Activated naive CD4-positive, alpha-beta T cell treated with anti-CD3 and anti-CD28 coated beads for 36 hours (primary cell): ENCODE measurements at regions of chr5 and their contacts with region 1.

Region 1: DNA sequence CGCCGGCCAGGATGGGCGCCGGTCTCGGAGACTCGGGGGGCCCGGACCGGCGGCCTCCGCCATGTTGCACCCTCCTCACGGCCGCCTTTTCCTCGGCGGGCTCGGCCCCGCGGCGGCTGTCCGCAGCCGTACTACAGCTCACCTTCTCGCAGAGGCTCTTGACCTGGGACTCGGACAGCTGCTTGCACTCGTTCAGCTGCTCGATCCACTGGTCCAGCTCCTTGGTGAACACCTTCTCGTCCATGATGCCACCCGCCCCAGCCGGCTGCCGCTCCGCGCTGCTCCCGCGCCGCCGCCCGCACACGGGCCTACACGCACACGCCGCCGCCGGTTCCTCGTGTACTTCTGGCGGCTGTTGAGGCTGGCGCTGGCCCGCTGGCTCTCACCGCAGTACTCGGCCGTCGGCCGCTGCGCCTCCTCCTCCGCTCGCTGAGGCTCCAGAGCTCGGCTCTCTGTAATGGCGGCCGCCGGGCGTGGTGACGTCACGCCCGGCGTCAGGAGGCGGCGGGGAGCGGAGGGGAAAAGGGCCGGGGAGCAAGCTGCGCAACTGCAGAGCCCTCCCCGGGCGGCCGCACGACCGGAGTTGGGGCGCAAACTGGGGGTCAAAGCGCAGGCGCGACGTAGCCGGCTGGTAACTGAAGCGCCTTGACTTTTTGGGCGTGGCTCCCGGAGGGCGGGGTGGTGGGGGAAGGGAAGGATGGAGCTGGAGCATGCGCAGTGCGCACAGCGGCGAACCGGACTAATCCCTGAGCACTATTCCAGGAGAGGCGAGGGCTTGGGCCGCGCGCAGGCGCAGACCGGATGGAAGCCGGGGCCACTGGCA is at the start of gene PPP2CA:
- DNase-seq: peak; percentile 99
- H3K4me3 Mint-ChIP-seq: peak within 1 kb of the TSS; percentile 96
- H3K27ac Mint-ChIP-seq: peak within 1 kb of the TSS; percentile 96
- H3K4me1 Mint-ChIP-seq: peaks cover 52% of the 10 kb centered on the region
- H3K27me3 Mint-ChIP-seq: no peaks in the 10 kb centered on the region
- total RNA-seq, gene PPP2CA: 132 to 135 TPM

Region 2: DNA sequence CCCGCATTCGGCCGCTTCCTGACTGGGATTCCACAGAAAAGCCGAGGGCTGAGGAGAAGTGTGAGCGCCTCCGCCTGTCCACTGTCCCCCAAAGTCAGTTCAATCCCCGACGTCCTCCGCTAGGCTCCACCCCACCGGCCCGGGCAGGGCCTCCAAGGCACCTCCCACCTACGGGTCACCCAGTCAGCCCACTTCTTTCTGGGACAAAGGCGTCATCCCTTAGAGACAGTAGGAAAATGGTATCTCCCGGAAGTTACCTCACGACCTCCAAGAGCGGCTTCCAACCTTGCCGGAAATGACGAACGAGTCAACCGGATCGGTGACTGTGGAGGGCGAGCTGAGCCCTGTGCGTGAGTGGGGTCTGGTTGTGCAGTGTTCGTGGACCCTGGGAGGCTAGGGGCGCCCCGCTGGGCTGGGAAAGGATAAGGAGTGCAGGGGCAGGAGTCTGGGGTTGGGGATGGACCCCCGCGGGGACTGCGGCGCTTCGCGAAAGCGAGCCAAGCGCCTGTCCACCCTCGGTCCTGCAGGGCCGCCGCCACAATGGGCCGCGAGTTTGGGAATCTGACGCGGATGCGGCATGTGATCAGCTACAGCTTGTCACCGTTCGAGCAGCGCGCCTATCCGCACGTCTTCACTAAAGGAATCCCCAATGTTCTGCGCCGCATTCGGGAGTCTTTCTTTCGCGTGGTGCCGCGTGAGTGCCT is 1359.3 kb before region 1 on chr5 and contains the starts of genes GDF9 and UQCRQ:
- CTCF ChIA-PET with region 1: no interaction called
- intact Hi-C with region 1: loop called (anchors 10 kb)
- DNase-seq: peak; percentile 96
- H3K4me3 Mint-ChIP-seq: peak within 1 kb of the TSS; percentile 99
- H3K27ac Mint-ChIP-seq: peak within 1 kb of the TSS; percentile 97
- H3K4me1 Mint-ChIP-seq: peaks cover 27% of the 10 kb centered on the region
- H3K27me3 Mint-ChIP-seq: no peaks in the 10 kb centered on the region
- total RNA-seq, gene GDF9: 0.64 to 1.2 TPM
- total RNA-seq, gene UQCRQ: 677 to 784 TPM

Region 3: GRCh38 chr5:134004592-134005375 is 221.0 kb before region 1 on chr5 and contains the start of gene VDAC1:
- CTCF ChIA-PET with region 1: interaction called, 3 read pairs
- intact Hi-C with region 1: loop called (anchors 1 kb)
- DNase-seq: peak; percentile 79
- H3K4me3 Mint-ChIP-seq: peak within 1 kb of the TSS; percentile 89
- H3K27ac Mint-ChIP-seq: peak within 1 kb of the TSS; percentile 95
- H3K4me1 Mint-ChIP-seq: peaks cover 42% of the 10 kb centered on the region
- H3K27me3 Mint-ChIP-seq: no peaks in the 10 kb centered on the region
- total RNA-seq, gene VDAC1: 485 to 513 TPM

Region 4: DNA sequence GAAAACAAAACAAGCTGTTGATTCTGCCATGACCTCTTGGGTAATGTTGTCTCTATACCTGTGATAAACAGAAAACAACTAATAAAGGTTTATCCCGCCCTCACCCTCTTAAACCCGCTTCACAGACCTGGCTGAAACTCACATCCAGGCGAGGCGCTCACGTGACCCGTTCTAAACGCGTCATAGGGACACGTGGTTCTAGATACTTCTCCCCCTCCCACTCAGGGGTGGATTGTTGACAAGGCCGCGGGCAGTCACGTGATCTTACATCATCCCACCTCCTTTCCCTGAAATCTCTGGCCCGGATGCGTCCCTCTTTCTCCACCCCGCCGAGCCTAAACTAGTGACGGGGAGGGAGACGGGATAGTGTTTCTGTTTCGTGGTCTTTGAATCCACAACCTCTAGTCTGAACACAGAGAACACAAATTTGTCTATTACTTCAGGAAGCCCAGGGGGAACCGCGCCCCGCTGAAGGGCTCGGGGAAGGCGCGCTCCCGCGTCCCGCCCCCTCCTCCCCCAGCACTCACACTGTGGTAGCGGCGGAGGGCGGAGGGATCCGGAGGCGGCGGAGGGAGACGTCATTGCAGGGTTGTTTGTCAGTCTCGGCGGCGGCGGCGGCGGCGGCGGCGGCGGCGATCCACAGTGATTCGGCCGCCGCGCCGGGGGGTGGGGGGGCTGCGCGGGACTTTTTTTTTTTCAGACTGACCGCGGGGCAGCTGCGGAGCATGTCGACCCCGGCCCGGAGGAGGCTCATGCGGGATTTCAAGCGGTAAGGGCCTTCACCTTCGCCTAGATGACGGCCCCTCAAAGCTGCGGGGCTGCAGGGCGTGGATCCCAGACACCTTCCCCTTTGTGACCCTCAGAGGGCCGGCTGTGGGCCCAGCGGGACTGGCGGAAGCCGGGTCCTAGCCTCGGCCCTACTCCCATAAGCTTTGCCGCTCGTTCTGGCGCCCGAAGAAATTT is 145.3 kb after region 1 on chr5 and contains the start of gene UBE2B:
- CTCF ChIA-PET with region 1: no interaction called
- intact Hi-C with region 1: loop called (anchors 1 kb)
- DNase-seq: peak; percentile 99
- H3K4me3 Mint-ChIP-seq: peak within 1 kb of the TSS; percentile 98
- H3K27ac Mint-ChIP-seq: peak within 1 kb of the TSS; percentile 99
- H3K4me1 Mint-ChIP-seq: peaks cover 58% of the 10 kb centered on the region
- H3K27me3 Mint-ChIP-seq: no peaks in the 10 kb centered on the region
- total RNA-seq, gene UBE2B: 116 to 129 TPM

Region 5: DNA sequence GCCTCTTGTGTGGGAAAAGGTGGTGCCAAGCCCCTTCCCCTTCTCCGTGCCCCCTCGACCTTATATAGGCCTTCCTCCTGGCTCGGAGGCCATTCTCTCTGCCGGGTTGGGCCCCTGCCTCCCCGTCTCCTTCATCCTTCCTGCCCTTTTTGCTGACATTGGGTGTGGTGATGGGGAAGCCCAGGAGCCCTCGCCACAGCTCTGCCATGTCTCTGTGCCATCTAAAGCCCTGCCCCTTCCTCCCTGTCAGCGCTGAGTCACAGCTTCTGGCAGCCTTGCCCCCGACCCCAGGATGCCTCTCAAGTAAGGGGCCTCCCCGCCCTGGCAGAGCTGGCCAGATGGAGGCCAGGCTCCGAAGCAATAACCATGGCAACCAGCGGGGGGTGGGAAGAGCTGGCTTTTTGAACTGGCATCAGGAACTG is 330.1 kb after region 1 on chr5:
- CTCF ChIA-PET with region 1: no interaction called
- intact Hi-C with region 1: loop called (anchors 1 kb)
- DNase-seq: peak; percentile 98
- H3K4me3 Mint-ChIP-seq: peak overlapping the region; percentile 80
- H3K27ac Mint-ChIP-seq: peak overlapping the region; percentile 100
- H3K4me1 Mint-ChIP-seq: peaks cover 38% of the 10 kb centered on the region
- H3K27me3 Mint-ChIP-seq: no peaks in the 10 kb centered on the region

Region 6: DNA sequence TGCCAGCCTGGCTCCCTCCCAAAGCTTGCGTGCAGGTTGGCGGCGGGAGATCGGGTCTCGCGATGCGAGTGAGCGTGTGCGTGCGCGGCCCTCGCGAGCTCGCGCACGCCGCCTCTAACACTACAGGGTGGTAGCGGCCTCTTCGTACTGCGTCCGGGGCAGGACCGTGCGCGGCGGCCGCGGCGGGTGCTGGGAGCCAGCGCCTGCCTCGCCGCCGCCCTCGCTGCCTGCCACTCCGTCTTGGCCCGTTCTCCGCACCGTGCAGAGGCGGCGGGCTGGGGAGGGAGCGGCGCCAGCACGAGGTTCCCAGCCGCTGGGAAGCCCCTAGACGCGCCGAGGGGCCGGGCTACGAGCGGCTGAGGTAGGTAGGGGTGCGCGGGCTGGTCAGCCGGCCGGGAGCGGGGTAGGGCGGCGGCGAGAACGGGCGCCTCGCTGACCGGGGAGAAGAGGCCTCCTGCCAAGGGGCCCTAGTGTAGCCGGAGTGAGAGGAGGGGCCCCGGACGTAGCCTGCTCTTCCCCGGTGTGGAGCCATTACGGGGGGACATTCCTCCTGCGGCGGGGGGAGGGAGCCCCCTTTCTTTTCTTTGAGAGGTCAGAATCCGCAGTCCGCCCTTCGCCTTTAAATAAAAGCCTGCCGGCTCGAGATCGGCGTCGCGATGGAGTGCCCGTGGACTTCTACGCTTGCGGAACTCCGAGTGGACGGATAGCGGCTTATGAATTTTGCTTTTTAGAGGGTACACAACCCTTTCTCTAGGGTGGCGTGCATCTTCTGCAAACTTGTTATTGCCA is 620.2 kb after region 1 on chr5 and contains the start of gene C5orf24:
- CTCF ChIA-PET with region 1: no interaction called
- intact Hi-C with region 1: loop called (anchors 1 kb)
- DNase-seq: peak; percentile 96
- H3K4me3 Mint-ChIP-seq: peak within 1 kb of the TSS; percentile 88
- H3K27ac Mint-ChIP-seq: peak within 1 kb of the TSS; percentile 97
- H3K4me1 Mint-ChIP-seq: peaks cover 32% of the 10 kb centered on the region
- H3K27me3 Mint-ChIP-seq: no peaks in the 10 kb centered on the region
- total RNA-seq, gene C5orf24: 17.6 to 21.2 TPM